ENCODE measurements at regions of chr5 and their contacts with region 1.

Region 1: GRCh38 chr5:134145779-134146581 is 30.8 kb downstream of the SKP1 start:
- DNase-seq: peak; percentile 73 to 75
- ATAC-seq: peak; percentile 69 to 91 (median 84)
- H3K4me3 ChIP-seq: no peak overlapping the region
- H3K27ac ChIP-seq: no peak overlapping the region
- H3K4me1 ChIP-seq: peaks cover 4 to 49% (median 24%) of the 10 kb centered on the region in 9 donors
- H3K27me3 ChIP-seq: no peaks in the 10 kb centered on the region
- CTCF ChIP-seq: peak; percentile 92 to 98 (median 95)

Region 2: GRCh38 chr5:134092878-134093277 is 53.1 kb before region 1 on chr5:
- intact Hi-C with region 1: loop called in 1 of 10 experiments (anchors 10 kb)
- DNase-seq: no peak
- ATAC-seq: no peak
- H3K4me3 ChIP-seq: no peak overlapping the region
- H3K27ac ChIP-seq: no peak overlapping the region
- H3K4me1 ChIP-seq: peaks cover 0 to 7% (median 0%) of the 10 kb centered on the region in 9 donors
- H3K27me3 ChIP-seq: peaks cover 0 to 5% (median 0%) of the 10 kb centered on the region in 7 donors
- CTCF ChIP-seq: no peak

Region 3: GRCh38 chr5:134125039-134126015 is 20.7 kb before region 1 on chr5:
- intact Hi-C with region 1: no loop called
- DNase-seq: peak in 1 of 2 donors; percentile 53
- ATAC-seq: peak; percentile 17 to 66 (median 50)
- H3K4me3 ChIP-seq: no peak overlapping the region
- H3K27ac ChIP-seq: peak overlapping the region in 9 of 10 donors; percentile 20 to 80 (median 66)
- H3K4me1 ChIP-seq: peaks cover 22 to 59% (median 45%) of the 10 kb centered on the region in 9 donors
- H3K27me3 ChIP-seq: no peaks in the 10 kb centered on the region
- CTCF ChIP-seq: no peak

Measured in heart right ventricle (tissue), 16 donors.